ENCODE measurements at regions of chr19 and their contacts with region 1.

Region 1: DNA sequence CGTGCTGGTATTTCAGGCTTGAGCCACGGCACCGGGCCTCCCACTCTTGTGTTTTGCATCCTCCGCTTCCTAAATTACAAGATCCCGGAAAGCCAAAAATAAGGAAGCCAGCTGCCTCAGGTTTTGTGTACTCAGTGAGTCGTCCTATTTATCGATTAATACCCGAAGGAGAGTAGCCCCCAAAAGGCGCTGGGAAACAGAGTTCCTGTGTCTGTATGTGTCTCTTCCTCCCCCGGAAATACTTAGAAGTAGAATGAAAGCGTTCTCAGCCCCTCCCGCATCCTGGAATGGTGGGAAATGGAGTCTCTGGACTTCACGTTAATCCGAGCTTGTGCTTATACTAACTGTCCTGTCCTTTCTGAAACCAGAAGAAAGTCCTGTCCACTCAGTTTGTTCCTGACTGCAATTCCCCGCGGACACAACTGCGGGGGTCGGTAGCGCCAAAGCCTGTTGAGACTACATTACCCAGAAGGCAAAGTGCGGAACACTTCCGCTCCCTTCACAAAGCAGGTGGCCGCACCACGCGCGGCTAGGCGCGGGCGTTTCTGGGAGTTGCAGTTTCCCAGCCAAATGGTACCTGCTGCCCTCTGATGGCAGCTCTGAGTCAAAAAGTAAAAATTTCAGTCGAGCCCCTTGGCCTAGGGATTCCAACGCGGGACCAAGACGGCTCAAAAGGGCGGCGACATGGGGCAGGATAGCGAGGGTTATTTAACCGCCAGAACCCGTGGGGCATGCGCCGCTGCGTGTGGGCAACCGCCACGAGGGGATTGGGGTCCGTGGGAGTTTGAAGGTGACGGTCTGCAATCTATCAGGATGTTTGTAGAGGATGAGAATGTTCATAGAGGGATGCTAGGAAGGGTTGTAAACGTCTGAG is 2.2 kb upstream of the GSK3A start:
- DNase-seq: peak; percentile 95
- H3K4me3 Mint-ChIP-seq: peak overlapping the region; percentile 75
- H3K27ac Mint-ChIP-seq: peak overlapping the region; percentile 51
- H3K4me1 Mint-ChIP-seq: peaks cover 40% of the 10 kb centered on the region
- H3K27me3 Mint-ChIP-seq: no peaks in the 10 kb centered on the region
- CTCF ChIP-seq: peak; percentile 75

Region 2: DNA sequence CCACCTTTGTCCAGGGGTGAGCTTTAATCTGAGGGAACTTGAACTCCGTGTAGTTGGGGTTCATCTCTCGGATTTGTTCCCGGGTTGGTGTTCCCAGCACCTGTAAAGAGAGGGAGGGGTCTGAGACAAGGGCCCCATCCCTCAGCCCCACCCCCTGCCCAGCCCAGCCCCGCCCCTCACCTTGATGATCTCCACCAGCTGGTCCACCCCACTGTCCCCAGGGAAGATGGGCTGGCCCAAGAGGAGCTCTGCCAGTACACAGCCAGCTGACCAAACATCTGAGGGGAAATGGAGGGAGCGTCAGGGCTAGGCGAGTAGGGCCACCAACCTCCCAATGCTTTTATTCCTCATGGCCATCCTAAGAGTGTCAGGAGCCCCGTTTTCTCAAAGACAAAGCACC is 11.5 kb before region 1 on chr19:
- CTCF ChIA-PET with region 1: interaction called, 11 read pairs
- intact Hi-C with region 1: no loop called
- DNase-seq: no peak
- H3K4me3 Mint-ChIP-seq: no peak overlapping the region
- H3K27ac Mint-ChIP-seq: peak overlapping the region; percentile 58
- H3K4me1 Mint-ChIP-seq: no peaks in the 10 kb centered on the region
- H3K27me3 Mint-ChIP-seq: no peaks in the 10 kb centered on the region
- CTCF ChIP-seq: no peak

Region 3: DNA sequence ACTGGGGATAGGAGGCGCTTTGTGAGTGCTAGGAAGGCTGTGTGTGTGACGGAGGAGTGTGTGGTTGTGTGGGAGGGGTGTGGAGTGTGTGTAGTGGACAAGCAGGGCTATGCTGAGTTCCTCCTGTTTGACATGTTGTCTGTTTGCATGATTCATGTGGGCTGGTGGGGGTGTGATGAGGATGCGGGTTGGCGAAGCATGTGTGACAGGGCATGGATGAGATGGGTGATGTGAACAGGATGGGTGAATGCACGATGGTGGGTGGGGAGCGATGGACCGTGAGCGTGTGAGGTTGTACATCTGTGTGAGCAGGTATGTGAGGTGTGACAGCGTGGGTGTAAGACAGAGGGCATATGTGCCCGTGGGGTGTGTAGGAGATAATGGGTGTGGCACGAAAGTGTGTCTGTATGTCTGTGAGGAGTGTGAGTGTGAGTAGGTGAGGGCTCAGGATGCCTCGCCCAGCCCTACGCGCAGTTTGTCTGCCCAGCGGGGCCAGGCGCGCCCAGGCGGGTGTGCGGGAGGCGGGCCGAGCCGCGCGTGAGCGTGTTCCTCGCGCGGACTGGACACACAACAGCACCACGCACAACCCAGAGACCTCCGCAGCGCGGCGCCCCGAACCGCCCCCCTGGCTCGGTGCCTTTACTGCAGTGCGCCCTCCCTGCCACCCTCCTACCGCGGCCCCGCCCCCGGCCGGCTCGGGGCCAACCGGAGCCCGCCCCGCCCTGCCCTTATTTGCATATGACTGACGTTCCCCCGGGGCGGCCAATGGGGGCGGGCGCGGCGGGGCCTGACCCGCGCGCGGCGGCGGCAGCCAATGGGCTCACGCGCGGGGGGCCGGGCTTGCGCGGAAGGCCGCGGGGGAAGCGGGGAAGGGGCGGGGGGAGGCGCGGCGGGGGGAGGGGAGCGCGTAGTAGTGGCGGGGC is 38.8 kb after region 1 on chr19:
- CTCF ChIA-PET with region 1: interaction called, 25 read pairs
- intact Hi-C with region 1: loop called (anchors 1 kb)
- DNase-seq: peak; percentile 98
- H3K4me3 Mint-ChIP-seq: no peak overlapping the region
- H3K27ac Mint-ChIP-seq: no peak overlapping the region
- H3K4me1 Mint-ChIP-seq: peaks cover 26% of the 10 kb centered on the region
- H3K27me3 Mint-ChIP-seq: no peaks in the 10 kb centered on the region
- CTCF ChIP-seq: no peak

Region 4: GRCh38 chr19:42325273-42325895 is 80.8 kb after region 1 on chr19 and contains the start of gene MEGF8:
- CTCF ChIA-PET with region 1: no interaction called
- intact Hi-C with region 1: loop called (anchors 1 kb)
- DNase-seq: peak; percentile 99
- H3K4me3 Mint-ChIP-seq: peak within 1 kb of the TSS; percentile 84
- H3K27ac Mint-ChIP-seq: peak within 1 kb of the TSS; percentile 69
- H3K4me1 Mint-ChIP-seq: peaks cover 29% of the 10 kb centered on the region
- H3K27me3 Mint-ChIP-seq: peaks cover 38% of the 10 kb centered on the region
- CTCF ChIP-seq: peak; percentile 88
- total RNA-seq, gene MEGF8: 32.0 and 35.0 TPM in 2 replicates